ENCODE measurements at regions of chr10 and their contacts with region 1.

Region 1: GRCh38 chr10:34723750-34724149 is 91.3 kb downstream of the PARD3 start:
- DNase-seq: no peak
- ATAC-seq: peak; percentile 58
- H3K4me3 ChIP-seq: no peak overlapping the region
- H3K27ac ChIP-seq: no peak overlapping the region
- H3K4me1 ChIP-seq: peaks cover 29 to 52% of the 10 kb centered on the region in 2 experiments
- H3K27me3 ChIP-seq: no peaks in the 10 kb centered on the region
- CTCF ChIP-seq: peak; percentile 33 to 67 (median 41); a peak in 3 of 6 replicates
- POLR2A ChIP-seq: no peak
- RAD21 ChIP-seq: peak; percentile 82

Region 2: GRCh38 chr10:34824870-34825269 is 101.1 kb after region 1 on chr10:
- CTCF ChIA-PET with region 1: no interaction called
- POLR2A ChIA-PET with region 1: no interaction called
- RAD21 ChIA-PET with region 1: interaction called in 1 of 2 experiments, 4 read pairs
- intact Hi-C with region 1: loop called (anchors 5 kb)
- DNase-seq: no peak
- ATAC-seq: peak; percentile 57
- H3K4me3 ChIP-seq: no peak overlapping the region
- H3K27ac ChIP-seq: no peak overlapping the region
- H3K4me1 ChIP-seq: peaks cover 16 to 24% of the 10 kb centered on the region in 2 experiments
- H3K27me3 ChIP-seq: no peaks in the 10 kb centered on the region
- CTCF ChIP-seq: peak; percentile 40 to 52 (median 42)
- POLR2A ChIP-seq: no peak
- RAD21 ChIP-seq: peak; percentile 63

Region 3: DNA sequence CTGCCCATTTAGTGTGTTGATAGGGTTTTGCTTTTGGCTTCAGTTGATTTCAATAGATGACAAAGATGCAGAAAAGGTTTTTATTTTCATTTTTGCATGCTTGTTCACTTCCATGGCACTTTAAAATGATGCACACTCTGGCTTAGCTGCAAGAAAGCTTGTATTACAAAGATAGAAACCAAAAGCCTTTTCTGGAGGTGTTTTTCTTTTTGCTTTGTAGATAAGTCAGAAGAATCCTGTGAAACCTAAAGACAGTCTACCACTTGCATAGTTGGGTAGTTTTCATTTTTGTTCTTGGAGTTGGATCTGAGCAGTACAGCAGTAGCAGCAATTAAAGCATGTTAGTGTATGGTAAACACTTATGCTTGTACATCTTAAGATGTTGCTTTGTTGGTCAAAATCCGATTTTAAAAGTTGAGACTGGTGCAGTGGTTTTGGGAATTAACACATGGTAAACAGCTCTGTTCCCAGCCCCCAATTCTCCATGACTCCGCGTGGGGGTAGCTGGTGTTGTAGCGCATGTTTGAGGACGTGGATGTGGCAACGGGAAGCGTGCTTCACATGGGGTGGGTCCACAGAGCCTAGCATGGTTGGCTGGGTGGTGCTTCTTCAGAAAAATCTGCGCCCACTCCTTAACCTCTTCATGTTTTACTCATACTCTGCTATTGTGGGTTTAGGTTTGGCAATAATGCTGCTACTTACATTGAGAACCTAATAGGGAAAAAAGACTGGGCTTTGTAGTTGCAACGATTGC is 632.4 kb after region 1 on chr10:
- CTCF ChIA-PET with region 1: no interaction called
- POLR2A ChIA-PET with region 1: no interaction called
- RAD21 ChIA-PET with region 1: no interaction called
- intact Hi-C with region 1: no loop called
- DNase-seq: no peak
- ATAC-seq: no peak
- H3K4me3 ChIP-seq: no peak overlapping the region
- H3K27ac ChIP-seq: no peak overlapping the region
- H3K4me1 ChIP-seq: peaks cover 13 to 14% of the 10 kb centered on the region in 2 experiments
- H3K27me3 ChIP-seq: no peaks in the 10 kb centered on the region
- CTCF ChIP-seq: no peak
- POLR2A ChIP-seq: no peak
- RAD21 ChIP-seq: no peak

Measured in HCT116 (cell line).